Activated B cell treated with CpG ODN at 0.5 μM for 24 hours (primary cell): ENCODE measurements at regions of chr2 and their contacts with region 1.

Region 1: DNA sequence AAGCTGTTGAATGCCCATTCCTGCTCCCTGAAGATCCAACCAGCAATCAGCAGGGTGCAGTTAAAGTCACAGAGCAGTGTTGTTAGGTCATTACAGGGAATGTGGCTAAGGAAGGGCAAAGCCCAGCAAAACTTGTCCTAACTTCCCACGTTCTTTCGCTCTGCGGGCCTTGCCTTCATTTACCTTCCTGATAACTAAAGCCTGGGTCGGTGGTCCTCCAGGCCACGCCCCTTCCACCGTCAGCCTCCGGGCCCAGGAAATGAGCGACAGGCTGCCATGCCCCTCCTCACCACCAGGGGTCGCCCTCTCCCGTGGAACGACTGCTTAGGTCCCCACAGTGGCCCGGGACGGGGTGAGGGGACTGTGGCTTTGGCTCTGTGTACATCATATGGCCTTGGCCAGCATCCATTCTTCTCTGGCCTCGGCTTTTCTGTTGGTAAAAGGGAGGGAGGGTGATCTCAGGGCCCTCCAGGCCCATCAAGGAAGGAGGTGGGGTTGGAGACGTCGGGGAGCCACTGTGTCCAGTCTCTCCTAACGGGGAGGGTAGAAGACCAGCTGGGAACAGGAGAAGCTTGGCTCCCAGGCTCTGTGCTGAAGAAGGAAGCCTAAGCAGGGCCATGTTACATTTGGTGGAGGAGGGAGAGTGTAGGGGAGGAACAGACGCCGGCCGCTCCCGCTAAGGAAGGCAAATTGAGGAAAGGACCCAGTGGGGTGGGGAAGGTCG is 2.2 kb downstream of the SH2D6 start:
- DNase-seq: peak; percentile 95
- ATAC-seq: peak; percentile 76
- H3K4me3 Mint-ChIP-seq: peak overlapping the region; percentile 78
- H3K27ac Mint-ChIP-seq: peak overlapping the region; percentile 80
- H3K4me1 Mint-ChIP-seq: peaks cover 25% of the 10 kb centered on the region
- H3K27me3 Mint-ChIP-seq: no peaks in the 10 kb centered on the region
- CTCF ChIP-seq: peak; percentile 90

Region 2: DNA sequence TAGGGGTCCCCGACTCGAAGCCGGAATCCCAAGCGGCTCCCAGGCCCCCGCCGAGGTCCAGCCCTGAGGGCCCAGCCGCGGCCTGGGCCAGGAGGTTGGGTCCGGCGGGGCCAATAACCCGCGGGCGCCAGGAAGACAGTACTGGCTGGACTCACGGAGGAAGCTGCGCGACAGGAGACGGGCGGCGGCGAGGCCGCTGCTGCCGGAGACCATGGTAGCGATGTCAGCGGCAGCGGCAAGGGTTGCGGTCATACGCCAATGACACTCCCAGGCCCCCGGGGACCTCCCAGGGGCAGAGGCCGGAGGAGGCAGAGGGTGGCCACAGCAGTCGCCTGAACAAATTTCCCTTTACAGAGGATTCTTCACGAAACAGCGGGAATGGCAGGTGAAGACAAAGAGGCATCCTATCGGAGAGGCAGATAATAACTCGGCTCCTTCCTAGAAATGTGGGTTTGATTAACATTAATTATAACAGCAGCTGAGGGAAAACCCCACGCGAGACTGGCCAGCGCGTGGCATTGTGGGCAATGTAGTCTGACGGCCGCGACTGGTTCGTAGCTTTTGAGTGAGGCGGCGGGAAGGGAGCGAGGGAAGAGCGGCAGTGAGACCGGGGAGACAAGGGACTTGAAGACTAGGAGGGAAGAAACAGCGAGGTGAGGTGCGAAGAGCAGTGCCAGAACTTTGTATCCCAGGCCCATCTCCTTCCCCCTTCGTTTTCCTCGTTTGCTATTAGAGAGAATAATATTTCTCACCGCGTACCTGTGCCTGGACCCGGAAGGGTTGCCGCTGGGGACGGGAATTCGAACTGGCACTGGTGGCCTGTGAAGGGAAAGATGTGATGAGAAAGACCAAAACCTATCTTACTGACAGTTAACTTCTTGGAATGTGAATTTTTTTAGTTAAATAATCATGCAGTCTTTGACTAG is 961.4 kb before region 1 on chr2 and contains the start of gene SUCLG1:
- CTCF ChIA-PET with region 1: no interaction called
- POLR2A ChIA-PET with region 1: no interaction called
- intact Hi-C with region 1: loop called (anchors 2 kb)
- DNase-seq: peak; percentile 78
- ATAC-seq: peak; percentile 98
- H3K4me3 Mint-ChIP-seq: peak within 1 kb of the TSS; percentile 93
- H3K27ac Mint-ChIP-seq: peak within 1 kb of the TSS; percentile 98
- H3K4me1 Mint-ChIP-seq: peaks cover 33% of the 10 kb centered on the region
- H3K27me3 Mint-ChIP-seq: no peaks in the 10 kb centered on the region
- CTCF ChIP-seq: no peak
- total RNA-seq, gene SUCLG1: 45.3 and 45.9 TPM in 2 replicates

Region 3: GRCh38 chr2:85409845-85410583 is 10.7 kb before region 1 on chr2 and contains the start of gene CAPG:
- CTCF ChIA-PET with region 1: interaction called, 5 read pairs
- POLR2A ChIA-PET with region 1: interaction called, 28 read pairs
- intact Hi-C with region 1: loop called (anchors 1 kb)
- DNase-seq: peak; percentile 76
- ATAC-seq: peak; percentile 75
- H3K4me3 Mint-ChIP-seq: peak within 1 kb of the TSS; percentile 89
- H3K27ac Mint-ChIP-seq: peak within 1 kb of the TSS; percentile 92
- H3K4me1 Mint-ChIP-seq: peaks cover 90% of the 10 kb centered on the region
- H3K27me3 Mint-ChIP-seq: no peaks in the 10 kb centered on the region
- CTCF ChIP-seq: no peak
- total RNA-seq, gene CAPG: 208 and 213 TPM in 2 replicates

Region 4: DNA sequence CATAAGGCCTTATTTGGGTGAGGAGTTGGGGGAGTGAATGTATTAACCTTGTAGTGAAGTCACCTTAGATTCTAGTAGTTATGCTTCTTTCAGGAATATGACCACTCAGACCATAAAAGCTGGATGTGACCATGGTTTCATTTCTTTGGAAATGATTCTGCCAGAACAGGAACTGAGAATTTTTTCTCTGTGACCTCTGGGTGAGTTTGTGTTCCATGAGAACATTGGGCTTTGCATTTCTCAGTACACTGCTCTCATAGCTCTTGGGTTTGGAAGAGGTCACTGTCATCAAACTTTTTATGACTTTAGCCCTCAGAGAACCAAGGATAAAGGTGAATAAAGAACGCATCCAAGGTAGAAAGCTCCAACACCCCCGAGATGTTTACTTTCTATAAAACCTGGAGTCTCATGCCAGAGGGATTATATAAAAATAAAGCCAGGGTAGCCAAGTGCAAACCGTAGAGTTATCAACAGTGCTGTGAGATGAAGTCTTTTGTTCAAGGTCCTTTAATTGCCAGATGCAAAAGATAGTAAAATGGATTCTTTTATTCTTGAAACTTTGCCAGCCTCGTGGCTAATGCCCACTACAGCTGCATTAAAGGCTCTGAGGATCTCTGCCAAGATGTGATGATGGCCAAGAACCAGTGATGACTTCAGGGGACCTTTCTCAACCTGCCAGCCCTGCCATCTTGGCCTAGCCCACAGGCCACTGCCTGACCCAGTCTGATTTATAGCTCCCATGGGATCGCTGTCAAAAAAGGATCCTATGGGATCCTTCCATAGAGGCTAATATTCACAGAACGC is 90.5 kb after region 1 on chr2:
- CTCF ChIA-PET with region 1: no interaction called
- POLR2A ChIA-PET with region 1: no interaction called
- intact Hi-C with region 1: no loop called
- DNase-seq: no peak
- ATAC-seq: no peak
- H3K4me3 Mint-ChIP-seq: no peak overlapping the region
- H3K27ac Mint-ChIP-seq: no peak overlapping the region
- H3K4me1 Mint-ChIP-seq: no peaks in the 10 kb centered on the region
- H3K27me3 Mint-ChIP-seq: peaks cover 2% of the 10 kb centered on the region
- CTCF ChIP-seq: no peak

Region 5: GRCh38 chr2:85538486-85539360 is 118.0 kb after region 1 on chr2 and contains the start of gene MAT2A:
- CTCF ChIA-PET with region 1: interaction called, 5 read pairs
- POLR2A ChIA-PET with region 1: interaction called, 133 read pairs
- intact Hi-C with region 1: loop called (anchors 1 kb)
- DNase-seq: peak; percentile 94
- ATAC-seq: peak; percentile 80
- H3K4me3 Mint-ChIP-seq: peak within 1 kb of the TSS; percentile 96
- H3K27ac Mint-ChIP-seq: peak within 1 kb of the TSS; percentile 99
- H3K4me1 Mint-ChIP-seq: peaks cover 37% of the 10 kb centered on the region
- H3K27me3 Mint-ChIP-seq: no peaks in the 10 kb centered on the region
- CTCF ChIP-seq: no peak
- total RNA-seq, gene MAT2A: 228 and 265 TPM in 2 replicates

Region 6: DNA sequence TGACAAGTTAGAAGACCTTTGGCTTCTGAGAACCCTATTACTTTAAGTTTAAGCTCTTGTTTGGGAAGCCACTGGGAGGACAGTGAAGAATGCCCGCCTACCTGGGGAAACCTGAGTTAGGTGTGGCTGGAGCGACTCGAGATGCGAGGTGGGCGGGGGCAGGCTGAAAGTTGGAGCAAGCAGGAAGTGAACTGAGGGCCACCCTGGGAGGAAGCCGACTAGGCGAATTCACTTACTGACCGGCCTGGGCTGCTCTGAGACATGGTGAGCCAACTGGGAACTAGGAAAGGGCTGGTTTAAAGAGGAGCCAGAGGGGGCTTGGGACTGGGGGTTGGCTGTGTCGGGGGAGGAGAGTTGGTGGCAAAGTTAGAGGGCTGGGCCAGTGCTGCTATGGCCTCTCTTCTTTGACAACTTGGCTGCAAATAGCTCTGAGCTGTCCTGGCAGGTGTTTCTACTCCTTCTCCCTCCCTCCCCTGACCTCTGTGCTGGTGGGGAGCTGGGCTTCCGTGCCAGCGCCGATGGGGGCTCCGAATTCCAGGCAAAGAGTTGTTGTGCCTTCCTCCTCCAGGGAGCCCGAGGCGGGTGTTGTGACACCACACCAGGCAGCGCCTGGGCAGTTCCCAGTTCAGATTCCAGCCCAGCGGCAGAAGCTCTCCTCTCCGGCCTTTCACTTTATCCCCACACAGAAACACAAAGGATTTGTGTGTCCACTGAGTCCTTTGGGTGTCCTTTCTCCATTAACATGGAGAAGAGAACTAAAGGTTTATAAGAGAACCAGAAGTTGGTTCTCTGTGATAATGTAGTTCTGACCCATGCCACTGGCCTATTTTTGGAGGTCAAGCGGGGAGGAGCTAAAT is 156.9 kb after region 1 on chr2 and contains the start of gene VAMP8:
- CTCF ChIA-PET with region 1: no interaction called
- POLR2A ChIA-PET with region 1: interaction called, 11 read pairs
- intact Hi-C with region 1: no loop called
- DNase-seq: peak; percentile 56
- ATAC-seq: peak; percentile 76
- H3K4me3 Mint-ChIP-seq: peak within 1 kb of the TSS; percentile 94
- H3K27ac Mint-ChIP-seq: peak within 1 kb of the TSS; percentile 93
- H3K4me1 Mint-ChIP-seq: peaks cover 37% of the 10 kb centered on the region
- H3K27me3 Mint-ChIP-seq: no peaks in the 10 kb centered on the region
- CTCF ChIP-seq: no peak
- total RNA-seq, gene VAMP8: 128 and 145 TPM in 2 replicates

Region 7: GRCh38 chr2:85611705-85612587 is 191.2 kb after region 1 on chr2 and contains the start of gene C2orf68:
- CTCF ChIA-PET with region 1: no interaction called
- POLR2A ChIA-PET with region 1: interaction called, 6 read pairs
- intact Hi-C with region 1: loop called (anchors 2 kb)
- DNase-seq: peak; percentile 81
- ATAC-seq: peak; percentile 73
- H3K4me3 Mint-ChIP-seq: peak within 1 kb of the TSS; percentile 98
- H3K27ac Mint-ChIP-seq: peak within 1 kb of the TSS; percentile 91
- H3K4me1 Mint-ChIP-seq: peaks cover 39% of the 10 kb centered on the region
- H3K27me3 Mint-ChIP-seq: no peaks in the 10 kb centered on the region
- CTCF ChIP-seq: no peak
- total RNA-seq, gene C2orf68: 49.7 and 61.5 TPM in 2 replicates

Region 8: GRCh38 chr2:85888684-85889626 is 468.3 kb after region 1 on chr2 and contains the start of gene ST3GAL5:
- CTCF ChIA-PET with region 1: no interaction called
- POLR2A ChIA-PET with region 1: no interaction called
- intact Hi-C with region 1: loop called (anchors 5 kb)
- DNase-seq: peak; percentile 97
- ATAC-seq: peak; percentile 87
- H3K4me3 Mint-ChIP-seq: peak within 1 kb of the TSS; percentile 97
- H3K27ac Mint-ChIP-seq: peak within 1 kb of the TSS; percentile 96
- H3K4me1 Mint-ChIP-seq: peaks cover 75% of the 10 kb centered on the region
- H3K27me3 Mint-ChIP-seq: no peaks in the 10 kb centered on the region
- CTCF ChIP-seq: peak; percentile 34
- total RNA-seq, gene ST3GAL5: 56.4 and 70.7 TPM in 2 replicates